ENCODE measurements at regions of chr6 and their contacts with region 1.

Region 1: GRCh38 chr6:166400181-166400580 is 17.4 kb upstream of the MPC1 start:
- DNase-seq: no peak
- H3K4me3 ChIP-seq: no peak overlapping the region
- H3K27ac ChIP-seq: no peak overlapping the region
- H3K4me1 ChIP-seq: peaks cover 0 to 3% (median 2%) of the 10 kb centered on the region in 4 experiments; a peak in 3 of 7 replicates
- H3K27me3 ChIP-seq: no peaks in the 10 kb centered on the region
- CTCF ChIP-seq: no peak
- EP300 ChIP-seq: no peak
- POLR2A ChIP-seq: no peak
- RAD21 ChIP-seq: no peak

Region 2: DNA sequence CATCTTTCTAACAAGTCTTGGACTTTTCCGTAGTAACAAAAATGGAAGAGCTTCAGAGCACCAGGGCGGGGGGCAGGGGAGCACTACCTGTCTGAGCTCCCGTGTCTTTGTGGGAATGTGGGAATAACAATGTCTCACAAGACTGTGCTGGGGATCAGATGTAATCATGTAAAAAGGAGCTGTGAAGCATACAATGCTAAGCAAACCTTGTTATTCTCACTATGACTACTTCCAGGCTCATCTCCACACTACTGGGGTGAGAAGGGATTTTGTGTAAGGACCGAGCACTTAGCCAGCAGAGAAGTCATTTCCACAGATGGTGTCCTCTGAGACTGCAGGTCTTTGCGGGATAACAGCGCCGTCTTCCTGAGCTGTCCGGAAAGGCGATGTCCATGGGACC is 119.1 kb before region 1 on chr6:
- CTCF ChIA-PET with region 1: interaction called, 64 read pairs
- POLR2A ChIA-PET with region 1: no interaction called
- DNase-seq: no peak
- H3K4me3 ChIP-seq: no peak overlapping the region
- H3K27ac ChIP-seq: no peak overlapping the region
- H3K4me1 ChIP-seq: no peaks in the 10 kb centered on the region
- H3K27me3 ChIP-seq: peaks cover 0 to 7% (median 0%) of the 10 kb centered on the region in 4 experiments; a peak in 3 of 7 replicates
- CTCF ChIP-seq: no peak
- EP300 ChIP-seq: no peak
- POLR2A ChIP-seq: no peak
- RAD21 ChIP-seq: no peak

Region 3: DNA sequence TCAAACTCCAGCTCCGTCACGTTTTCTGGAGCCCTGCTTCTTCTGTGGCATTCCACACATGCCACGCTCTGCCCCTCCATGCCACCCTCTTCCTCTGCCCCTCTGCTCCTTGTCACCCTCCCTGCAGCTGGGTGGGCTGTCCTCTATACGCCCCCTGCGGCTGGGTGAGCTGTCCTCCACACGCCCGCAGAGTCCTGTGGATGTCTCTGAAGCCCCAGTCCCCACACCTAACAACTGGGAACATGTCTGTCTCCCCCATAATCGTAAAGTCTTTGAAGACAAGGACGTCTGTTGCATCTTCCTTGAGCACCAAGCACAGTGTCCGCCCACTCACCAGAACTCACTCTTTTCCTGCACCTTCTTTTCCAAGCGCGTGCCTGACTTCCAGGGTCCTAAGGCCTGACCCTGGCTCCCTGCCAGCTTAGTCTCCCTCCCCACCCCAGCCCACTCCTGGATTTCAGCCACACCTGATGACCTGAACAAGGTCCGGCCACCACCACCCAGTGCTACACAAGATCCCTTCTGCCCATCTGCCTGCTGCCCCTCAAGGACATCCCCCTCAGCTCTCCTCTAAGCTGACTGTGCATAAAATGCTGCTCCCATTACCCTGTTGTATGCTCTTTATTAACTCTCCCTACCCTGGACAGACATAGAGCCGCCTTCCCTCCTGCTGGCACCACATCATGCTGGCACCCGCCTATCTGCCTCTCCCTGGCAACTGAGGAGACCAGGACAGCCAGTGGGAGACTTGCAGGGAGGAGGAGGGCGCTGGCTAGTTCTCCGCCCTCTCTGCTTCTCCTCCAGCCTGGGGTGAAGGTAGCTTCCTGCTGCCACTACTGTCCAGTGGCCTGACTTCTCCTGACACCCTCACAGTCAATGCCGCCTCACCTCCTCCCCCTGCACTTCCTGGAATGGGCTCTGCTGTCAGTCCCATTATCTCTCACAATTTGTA is 81.3 kb before region 1 on chr6:
- CTCF ChIA-PET with region 1: interaction called, 120 read pairs
- POLR2A ChIA-PET with region 1: no interaction called
- DNase-seq: no peak
- H3K4me3 ChIP-seq: no peak overlapping the region
- H3K27ac ChIP-seq: no peak overlapping the region
- H3K4me1 ChIP-seq: 0 out of 7 replicates have a peak, but pooled peaks cover 0 to 2% (median 0%) of the 10 kb centered on the region in 4 experiments
- H3K27me3 ChIP-seq: no peaks in the 10 kb centered on the region
- CTCF ChIP-seq: no peak
- EP300 ChIP-seq: no peak
- POLR2A ChIP-seq: no peak
- RAD21 ChIP-seq: no peak

Region 4: GRCh38 chr6:166387642-166388289 is 12.4 kb before region 1 on chr6:
- CTCF ChIA-PET with region 1: interaction called, 13 read pairs
- POLR2A ChIA-PET with region 1: interaction called, 3 read pairs
- DNase-seq: no peak
- H3K4me3 ChIP-seq: no peak overlapping the region
- H3K27ac ChIP-seq: no peak overlapping the region
- H3K4me1 ChIP-seq: no peaks in the 10 kb centered on the region; a peak in 1 of 7 replicates
- H3K27me3 ChIP-seq: no peaks in the 10 kb centered on the region; a peak in 1 of 7 replicates
- CTCF ChIP-seq: no peak
- EP300 ChIP-seq: no peak
- POLR2A ChIP-seq: no peak
- RAD21 ChIP-seq: no peak

Region 5: GRCh38 chr6:166419286-166419685 is 19.1 kb after region 1 on chr6:
- CTCF ChIA-PET with region 1: interaction called, 11 read pairs
- POLR2A ChIA-PET with region 1: no interaction called
- DNase-seq: no peak
- H3K4me3 ChIP-seq: no peak overlapping the region
- H3K27ac ChIP-seq: no peak overlapping the region
- H3K4me1 ChIP-seq: no peaks in the 10 kb centered on the region
- H3K27me3 ChIP-seq: no peaks in the 10 kb centered on the region
- CTCF ChIP-seq: no peak
- EP300 ChIP-seq: no peak
- POLR2A ChIP-seq: no peak
- RAD21 ChIP-seq: no peak

Region 6: DNA sequence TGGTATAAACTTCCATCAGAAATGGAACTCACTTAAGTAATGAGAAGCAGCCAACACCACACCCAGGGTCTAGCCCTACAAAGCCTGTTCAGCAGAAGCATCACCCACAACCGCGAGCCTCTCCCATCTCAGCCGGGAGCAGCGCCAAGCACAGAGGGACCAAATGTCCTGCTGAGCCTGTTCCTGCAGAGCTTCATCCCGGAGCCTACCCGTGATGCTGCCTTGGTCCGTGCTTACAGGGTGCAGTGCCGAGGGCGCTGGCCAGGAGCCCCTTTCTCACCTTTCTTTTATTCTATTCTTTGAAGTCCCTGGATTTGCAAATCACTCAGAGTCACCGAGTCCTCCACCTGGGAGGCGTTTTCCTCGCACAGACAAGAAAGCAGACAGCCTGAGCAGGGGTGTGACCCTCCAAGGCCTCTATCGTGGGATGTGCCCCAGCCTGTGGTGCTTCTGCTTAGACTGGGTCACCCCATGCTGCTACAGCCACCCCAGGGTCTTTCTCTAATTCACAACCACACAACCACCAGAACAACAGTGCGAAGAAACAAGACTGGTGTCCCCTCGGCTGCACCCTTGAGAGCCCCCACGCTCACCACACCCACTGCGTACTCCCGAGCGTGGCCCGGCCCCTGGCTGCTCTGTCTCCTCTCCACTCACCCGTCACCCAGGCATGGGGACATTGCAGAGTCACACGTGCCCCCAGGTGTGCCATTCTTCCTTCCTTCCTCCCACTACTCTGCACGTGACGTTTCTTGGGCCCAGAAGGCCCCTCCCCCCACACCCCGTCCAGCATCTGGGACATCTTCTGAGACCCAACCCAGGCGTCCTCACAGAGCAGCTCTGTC is 74.8 kb after region 1 on chr6:
- CTCF ChIA-PET with region 1: no interaction called
- POLR2A ChIA-PET with region 1: no interaction called
- DNase-seq: no peak
- H3K4me3 ChIP-seq: no peak overlapping the region
- H3K27ac ChIP-seq: no peak overlapping the region
- H3K4me1 ChIP-seq: no peaks in the 10 kb centered on the region; a peak in 1 of 7 replicates
- H3K27me3 ChIP-seq: no peaks in the 10 kb centered on the region; a peak in 1 of 7 replicates
- CTCF ChIP-seq: no peak
- EP300 ChIP-seq: no peak
- POLR2A ChIP-seq: no peak
- RAD21 ChIP-seq: no peak

Region 7: DNA sequence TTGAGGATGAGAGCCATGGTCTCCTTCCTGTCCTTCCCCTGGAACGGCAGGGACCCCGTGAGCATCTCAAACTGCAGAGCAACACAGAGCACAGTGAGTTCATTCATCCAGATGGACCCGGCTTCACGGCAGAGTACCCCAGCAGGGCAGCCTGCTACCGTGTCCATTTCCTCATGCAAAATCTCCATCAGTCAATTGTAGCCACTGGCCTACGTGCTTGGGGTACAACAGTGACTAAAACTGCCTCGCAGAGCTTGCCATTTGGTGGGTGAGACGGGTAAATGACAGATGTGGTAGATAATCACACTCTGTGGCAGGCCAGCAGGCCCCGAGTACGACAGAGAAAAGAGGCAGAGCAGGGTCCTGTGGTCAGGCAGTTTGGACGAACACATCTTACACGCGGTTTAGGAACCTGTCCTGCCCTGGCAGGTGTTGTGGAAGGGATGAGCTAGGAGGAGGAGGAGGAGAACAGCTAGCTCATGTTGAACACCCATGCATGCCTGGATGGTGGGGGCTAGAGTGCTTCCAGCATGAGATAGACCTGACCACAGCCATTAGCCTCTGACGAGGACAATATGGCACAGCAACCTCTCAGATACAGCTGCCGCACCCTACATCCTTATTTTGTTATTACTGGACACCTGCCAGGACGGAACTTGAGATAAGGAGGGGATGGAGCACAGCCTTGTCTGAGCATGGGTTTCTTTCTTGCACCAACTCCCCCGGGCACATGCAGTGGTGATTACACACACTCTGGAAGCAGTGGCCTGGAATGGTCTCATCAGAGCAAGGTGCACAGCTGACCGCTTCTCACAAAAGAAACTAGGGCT is 90.7 kb after region 1 on chr6:
- CTCF ChIA-PET with region 1: no interaction called
- POLR2A ChIA-PET with region 1: no interaction called
- DNase-seq: no peak
- H3K4me3 ChIP-seq: no peak overlapping the region
- H3K27ac ChIP-seq: no peak overlapping the region
- H3K4me1 ChIP-seq: peaks cover 3 to 8% (median 6%) of the 10 kb centered on the region in 4 experiments; a peak in 6 of 7 replicates
- H3K27me3 ChIP-seq: no peaks in the 10 kb centered on the region
- CTCF ChIP-seq: no peak
- EP300 ChIP-seq: no peak
- POLR2A ChIP-seq: no peak
- RAD21 ChIP-seq: no peak

Measured in H1 (cell line).